Sigmoid colon (tissue), 7 donors: ENCODE measurements at regions of chr6 and their contacts with region 1.

Region 1: DNA sequence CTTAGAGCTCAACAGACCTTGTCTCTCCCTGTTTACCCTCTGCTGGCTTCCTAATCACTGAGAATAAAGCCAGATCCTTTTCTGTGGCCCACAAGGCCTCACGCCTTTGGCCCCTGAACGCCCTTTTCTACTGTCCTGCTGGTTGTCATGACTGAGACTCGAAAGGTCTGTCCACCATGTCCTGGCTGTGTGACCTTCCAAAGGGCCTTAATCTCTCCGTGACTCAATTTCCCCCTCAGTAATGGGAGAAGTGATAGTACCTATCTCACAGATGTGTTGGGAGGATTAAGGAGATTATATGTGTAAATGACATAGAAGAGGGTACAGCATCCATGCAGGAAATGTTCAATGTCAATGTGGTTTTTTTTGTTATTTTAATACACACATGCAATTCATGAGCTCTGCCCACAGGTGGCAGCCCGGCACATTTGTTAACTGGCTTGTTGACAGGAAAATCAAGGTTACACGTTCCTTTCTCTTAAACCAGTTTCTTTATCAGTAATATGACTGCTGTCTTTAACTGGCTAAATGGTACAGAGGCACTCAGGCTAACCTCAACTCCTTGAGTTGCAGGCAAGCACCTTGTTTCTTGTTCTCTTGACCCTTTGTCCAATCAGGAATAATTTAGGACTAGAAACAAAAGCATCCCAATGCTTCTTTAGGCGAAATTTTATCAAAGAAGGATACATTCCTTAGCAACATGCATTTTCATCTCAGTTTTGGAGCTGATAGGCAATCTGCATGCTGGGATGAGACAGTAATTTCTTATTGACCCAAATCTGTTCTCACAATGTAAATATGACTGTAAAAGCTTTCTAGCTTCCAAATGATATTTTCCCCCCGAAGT is 16.6 kb downstream of the SLC22A1 start:
- DNase-seq: peak; percentile 73
- H3K4me3 ChIP-seq: no peak overlapping the region
- H3K27ac ChIP-seq: peak overlapping the region in 3 of 4 donors; percentile 82 to 89 (median 87)
- H3K4me1 ChIP-seq: peaks cover 0 to 50% (median 42%) of the 10 kb centered on the region in 4 donors
- H3K27me3 ChIP-seq: no peaks in the 10 kb centered on the region
- CTCF ChIP-seq: peak; percentile 54 to 84 (median 74)
- EP300 ChIP-seq: no peak
- POLR2A ChIP-seq: no peak

Region 2: DNA sequence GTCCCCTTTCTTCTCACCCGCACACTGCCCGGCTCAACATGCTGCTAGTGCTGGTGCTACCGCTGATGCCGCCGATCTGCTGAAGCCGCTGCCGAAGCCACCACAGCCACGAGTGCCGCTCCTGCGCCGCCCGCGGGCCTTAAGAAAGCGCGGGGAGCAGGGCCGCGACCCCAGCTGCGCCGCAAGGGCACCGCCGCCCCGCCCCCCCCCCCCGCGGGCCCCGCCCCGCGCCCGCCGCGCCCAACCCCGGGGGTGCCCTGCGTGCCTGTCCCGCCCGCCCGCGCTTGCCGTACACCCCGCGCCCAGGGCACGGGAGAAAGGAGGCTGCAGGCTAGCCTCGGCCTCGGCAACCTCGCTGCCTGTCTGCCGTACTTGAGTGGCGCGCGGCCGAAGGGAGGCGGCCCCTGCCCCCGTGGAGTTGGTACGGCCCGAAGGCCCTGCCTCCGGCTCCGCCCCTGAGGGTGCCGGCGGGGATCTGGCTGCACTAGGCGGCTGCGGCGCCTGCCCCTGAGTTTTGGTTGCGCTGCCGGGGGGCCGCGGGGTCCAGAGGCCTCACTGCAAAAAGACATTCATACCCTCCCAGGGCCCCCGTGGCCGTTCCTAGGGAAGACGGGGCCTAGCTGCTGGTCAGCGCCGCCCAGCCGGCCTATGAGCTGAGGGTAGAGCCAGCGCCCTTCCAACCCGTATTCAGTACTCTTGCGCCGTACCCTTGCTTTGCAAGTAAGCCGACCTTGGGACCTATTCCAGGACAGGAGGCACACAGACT is 444.9 kb before region 1 on chr6 and contains the start of gene SOD2:
- intact Hi-C with region 1: no loop called
- DNase-seq: peak; percentile 93
- H3K4me3 ChIP-seq: peak within 1 kb of the TSS; percentile 64 to 100 (median 86)
- H3K27ac ChIP-seq: peak within 1 kb of the TSS; percentile 93 to 100 (median 98)
- H3K4me1 ChIP-seq: peaks cover 0 to 59% (median 41%) of the 10 kb centered on the region in 4 donors
- H3K27me3 ChIP-seq: no peaks in the 10 kb centered on the region
- CTCF ChIP-seq: no peak
- EP300 ChIP-seq: no peak
- POLR2A ChIP-seq: peak; percentile 94 to 96
- total RNA-seq, gene SOD2: 171 to 1,498 (median 369) TPM

Region 3: GRCh38 chr6:160170018-160170680 is 31.9 kb after region 1 on chr6:
- intact Hi-C with region 1: loop called (anchors 2 kb)
- DNase-seq: no peak
- H3K4me3 ChIP-seq: no peak overlapping the region
- H3K27ac ChIP-seq: peak overlapping the region in 3 of 4 donors; percentile 63 to 68 (median 64)
- H3K4me1 ChIP-seq: peaks cover 0 to 22% (median 15%) of the 10 kb centered on the region in 4 donors
- H3K27me3 ChIP-seq: no peaks in the 10 kb centered on the region
- CTCF ChIP-seq: no peak
- EP300 ChIP-seq: no peak
- POLR2A ChIP-seq: no peak

Region 4: DNA sequence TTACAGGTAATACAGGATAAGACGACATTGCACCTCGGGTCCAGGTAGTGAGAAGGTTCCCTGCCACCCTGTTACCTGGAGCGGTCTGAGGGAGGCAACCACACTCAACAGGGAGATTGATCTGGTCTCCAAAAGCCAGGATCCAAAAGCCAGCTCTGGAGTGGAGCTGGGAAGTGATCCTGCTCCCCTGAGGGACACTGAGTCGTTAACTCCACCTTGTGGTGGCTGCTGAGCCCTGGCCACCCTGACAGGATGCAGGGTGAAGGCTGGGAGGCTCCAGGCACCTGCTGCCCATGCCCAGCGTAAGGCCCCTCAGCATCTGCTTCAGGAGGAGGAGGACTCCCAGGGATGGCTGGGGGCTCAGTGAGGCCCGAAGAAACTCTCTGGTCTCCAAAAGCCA is 159.1 kb after region 1 on chr6:
- intact Hi-C with region 1: loop called (anchors 2 kb)
- DNase-seq: no peak
- H3K4me3 ChIP-seq: no peak overlapping the region
- H3K27ac ChIP-seq: no peak overlapping the region
- H3K4me1 ChIP-seq: peaks cover 0 to 9% (median 0%) of the 10 kb centered on the region in 4 donors
- H3K27me3 ChIP-seq: no peaks in the 10 kb centered on the region
- CTCF ChIP-seq: peak in 2 of 4 experiments; percentile 12 to 14
- EP300 ChIP-seq: no peak
- POLR2A ChIP-seq: no peak

Region 5: DNA sequence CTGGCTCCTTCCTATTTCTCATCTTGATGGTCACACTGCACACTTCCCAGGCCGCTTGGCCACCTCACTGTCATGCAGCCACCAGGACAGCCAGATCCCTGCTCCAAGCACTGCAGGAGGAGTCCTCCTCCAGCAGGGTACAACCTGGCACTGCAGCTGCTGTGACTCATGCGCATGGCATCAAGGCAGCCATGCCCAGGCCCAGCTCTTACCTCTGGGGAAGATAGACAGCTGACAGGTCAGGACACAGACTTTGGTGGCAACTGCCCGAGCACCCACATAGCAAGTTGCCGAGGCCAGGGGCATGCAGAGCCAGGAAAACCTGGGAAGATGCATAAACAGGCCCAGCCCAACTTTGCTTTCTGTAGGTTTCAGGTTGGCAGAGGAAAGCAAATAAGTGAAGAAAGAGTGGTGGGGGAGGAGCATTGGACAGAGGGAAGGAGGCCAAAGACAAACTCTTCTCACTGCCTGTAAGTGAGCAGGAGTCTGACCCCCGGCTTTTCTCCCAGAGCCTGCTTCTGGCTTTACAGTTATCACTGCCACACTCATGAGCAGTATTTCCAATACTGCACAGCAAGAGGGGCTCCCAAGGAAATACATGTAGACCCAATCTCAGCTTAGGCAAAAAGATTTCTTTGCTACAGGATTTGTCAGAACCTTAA is 248.8 kb after region 1 on chr6:
- intact Hi-C with region 1: loop called (anchors 5 kb)
- DNase-seq: peak; percentile 82
- H3K4me3 ChIP-seq: no peak overlapping the region
- H3K27ac ChIP-seq: peak overlapping the region; percentile 2 to 54 (median 30)
- H3K4me1 ChIP-seq: peaks cover 0 to 32% (median 19%) of the 10 kb centered on the region in 4 donors
- H3K27me3 ChIP-seq: no peaks in the 10 kb centered on the region
- CTCF ChIP-seq: no peak
- EP300 ChIP-seq: no peak
- POLR2A ChIP-seq: no peak

Region 6: GRCh38 chr6:160455541-160456213 is 317.5 kb after region 1 on chr6:
- intact Hi-C with region 1: loop called (anchors 1 kb)
- DNase-seq: peak; percentile 87
- H3K4me3 ChIP-seq: peak overlapping the region in 3 of 4 donors; percentile 4 to 31 (median 27)
- H3K27ac ChIP-seq: peak overlapping the region; percentile 43 to 75 (median 68)
- H3K4me1 ChIP-seq: peaks cover 0 to 15% (median 11%) of the 10 kb centered on the region in 4 donors
- H3K27me3 ChIP-seq: no peaks in the 10 kb centered on the region
- CTCF ChIP-seq: peak; percentile 97 to 99 (median 99)
- EP300 ChIP-seq: no peak
- POLR2A ChIP-seq: no peak